Activated T-helper 1 cell treated with anti-CD3 and anti-CD28 coated beads, Interleukin-12 subunit alpha, Interleukin-12 subunit beta, Interleukin-2, Interleukin-4 antibody, amounts not matched to agents 30 ng/mL and 10 ng/mL and 1 ng/mL, durations not matched to agents 14 hours and 24 hours and 36 hours (primary cell): ENCODE measurements at regions of chr7 and their contacts with region 1.

Region 1: GRCh38 chr7:22488643-22489462 is 11.1 kb downstream of the STEAP1B start:
- DNase-seq: peak; percentile 28
- H3K4me3 Mint-ChIP-seq: no peak overlapping the region
- H3K27ac Mint-ChIP-seq: no peak overlapping the region
- H3K4me1 Mint-ChIP-seq: peaks cover 7% of the 10 kb centered on the region
- H3K27me3 Mint-ChIP-seq: peaks cover 13% of the 10 kb centered on the region

Region 2: DNA sequence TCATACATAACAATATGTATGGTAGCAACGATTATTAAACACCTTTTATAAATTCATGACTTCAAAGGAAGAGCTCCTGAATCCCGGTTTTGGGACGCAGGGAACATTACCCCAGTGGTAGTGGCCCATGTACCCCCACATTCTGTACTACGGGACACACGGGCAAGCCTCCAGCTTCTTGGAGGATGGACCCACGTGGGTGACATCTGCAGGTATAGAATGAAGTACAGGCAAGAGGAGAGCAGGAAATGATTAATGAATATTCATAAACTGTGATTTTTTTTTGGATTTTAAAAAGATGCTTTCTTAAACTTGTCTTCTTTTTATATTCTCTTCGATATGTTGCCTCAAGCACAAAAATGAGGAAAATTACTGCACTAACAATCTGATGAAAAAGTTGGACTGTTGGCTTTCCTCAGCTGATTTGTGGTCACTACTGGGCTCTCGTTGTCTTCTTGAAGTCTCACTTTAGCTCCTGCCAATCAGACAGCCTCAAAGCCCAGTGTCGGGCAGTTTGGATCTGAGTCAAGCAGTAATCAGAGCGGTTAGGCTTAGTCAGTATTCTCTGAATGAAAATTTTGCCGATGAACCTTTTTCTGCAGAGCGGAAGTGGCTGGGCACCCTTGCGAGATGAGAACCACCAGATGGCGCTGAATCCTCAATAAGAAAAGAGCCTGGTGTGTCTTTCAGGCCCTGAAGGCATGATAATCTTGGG is 385.4 kb before region 1 on chr7:
- intact Hi-C with region 1: loop called (anchors 1 kb)
- DNase-seq: peak; percentile 48
- H3K4me3 Mint-ChIP-seq: no peak overlapping the region
- H3K27ac Mint-ChIP-seq: no peak overlapping the region
- H3K4me1 Mint-ChIP-seq: peaks cover 6% of the 10 kb centered on the region
- H3K27me3 Mint-ChIP-seq: peaks cover 9% of the 10 kb centered on the region

Region 3: DNA sequence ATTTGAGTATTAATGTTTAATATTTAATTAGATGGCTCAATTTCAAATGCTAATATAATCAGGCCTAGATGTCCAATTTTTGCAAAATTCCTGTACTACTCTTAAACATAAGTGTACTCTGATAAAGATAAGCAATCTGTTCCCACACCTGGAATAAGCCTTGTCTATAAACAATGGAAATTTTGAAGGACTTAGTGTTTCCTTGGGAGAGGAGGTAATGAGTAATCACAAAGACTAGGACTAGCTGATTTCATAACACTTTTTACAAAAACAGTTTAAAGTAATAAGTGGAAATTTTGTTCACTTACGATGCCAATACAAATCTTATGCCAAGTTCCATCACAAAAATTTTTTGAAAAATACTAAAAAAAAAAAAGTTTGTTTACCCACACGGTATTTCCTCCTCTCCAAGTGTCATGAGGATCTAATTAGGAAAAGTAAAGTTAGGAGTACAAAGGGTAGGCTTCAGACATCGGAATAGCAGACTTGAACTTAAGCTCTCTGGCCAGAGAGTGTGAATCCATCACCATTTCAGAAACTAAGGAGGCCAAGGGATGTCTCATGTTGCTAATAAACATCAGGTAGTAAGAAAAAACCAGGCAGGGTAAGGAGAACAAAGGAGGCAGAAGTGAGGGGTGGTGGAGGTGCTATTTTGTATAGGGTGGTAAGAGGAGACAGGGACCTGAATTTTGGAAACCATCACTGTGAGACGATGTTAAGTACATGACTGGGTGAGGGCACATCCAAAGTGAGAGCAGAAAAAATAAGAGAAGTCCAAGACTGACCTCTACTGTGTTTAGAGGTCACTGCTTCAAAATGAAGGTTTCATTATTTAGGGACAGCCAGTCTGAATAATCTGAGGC is 193.2 kb before region 1 on chr7:
- intact Hi-C with region 1: loop called (anchors 5 kb)
- DNase-seq: no peak
- H3K4me3 Mint-ChIP-seq: no peak overlapping the region
- H3K27ac Mint-ChIP-seq: no peak overlapping the region
- H3K4me1 Mint-ChIP-seq: no peaks in the 10 kb centered on the region
- H3K27me3 Mint-ChIP-seq: peaks cover 7% of the 10 kb centered on the region

Region 4: DNA sequence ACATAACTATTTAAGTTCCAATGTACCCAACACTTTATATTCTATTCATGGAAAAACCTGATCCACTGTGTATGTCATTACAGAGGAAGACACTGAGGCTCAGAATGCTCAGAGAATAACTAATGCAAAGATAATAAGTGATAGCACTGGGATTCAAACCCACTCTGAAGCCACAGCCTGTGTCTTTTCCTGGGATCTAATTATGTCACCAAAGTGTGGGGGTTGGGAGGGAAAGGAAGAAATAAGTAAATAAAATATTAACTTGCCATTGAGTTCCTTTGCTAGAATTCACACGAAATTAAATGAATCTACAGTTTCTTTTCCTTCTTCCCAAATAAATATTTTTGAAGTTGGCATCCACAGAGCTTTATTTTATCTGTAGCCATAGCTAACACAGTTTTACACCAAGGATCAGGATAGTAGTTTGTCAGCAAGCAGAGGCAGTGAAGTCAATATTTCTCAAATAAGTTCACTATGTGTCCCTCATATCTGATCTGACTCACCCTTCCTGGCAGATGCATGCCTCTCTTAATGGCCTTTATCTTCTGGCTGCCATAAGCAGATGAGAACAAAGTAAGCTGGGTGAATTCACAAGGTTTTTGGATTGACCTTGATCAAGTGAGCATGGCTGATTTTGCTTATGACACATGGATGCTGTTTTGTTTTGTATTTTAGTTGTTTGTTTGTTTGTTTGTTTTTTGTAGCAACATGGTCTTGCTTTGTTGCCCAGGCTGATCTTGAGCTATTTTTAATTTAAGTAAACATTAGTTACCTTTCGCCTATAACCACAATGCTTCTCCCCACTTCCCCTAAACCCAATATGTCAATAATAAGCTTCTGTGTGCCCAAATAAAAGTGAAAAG is 138.2 kb before region 1 on chr7:
- intact Hi-C with region 1: no loop called
- DNase-seq: no peak
- H3K4me3 Mint-ChIP-seq: no peak overlapping the region
- H3K27ac Mint-ChIP-seq: no peak overlapping the region
- H3K4me1 Mint-ChIP-seq: no peaks in the 10 kb centered on the region
- H3K27me3 Mint-ChIP-seq: peaks cover 47% of the 10 kb centered on the region

Region 5: GRCh38 chr7:22542254-22542653 is 53.4 kb after region 1 on chr7:
- intact Hi-C with region 1: no loop called
- DNase-seq: no peak
- H3K4me3 Mint-ChIP-seq: no peak overlapping the region
- H3K27ac Mint-ChIP-seq: no peak overlapping the region
- H3K4me1 Mint-ChIP-seq: peaks cover 4% of the 10 kb centered on the region
- H3K27me3 Mint-ChIP-seq: peaks cover 37% of the 10 kb centered on the region